ENCODE measurements at regions of chr17 and their contacts with region 1.

Region 1: GRCh38 chr17:48024937-48025906 is 12.4 kb downstream of the COPZ2 start:
- DNase-seq: peak; percentile 98
- ATAC-seq: peak; percentile 91
- H3K4me3 Mint-ChIP-seq: peak overlapping the region; percentile 84
- H3K27ac Mint-ChIP-seq: peak overlapping the region; percentile 78
- H3K4me1 Mint-ChIP-seq: peaks cover 36% of the 10 kb centered on the region
- H3K27me3 Mint-ChIP-seq: peaks cover 16% of the 10 kb centered on the region

Region 2: GRCh38 chr17:48011405-48012150 is 13.6 kb before region 1 on chr17:
- CTCF ChIA-PET with region 1: interaction called, 21 read pairs
- DNase-seq: peak; percentile 83
- ATAC-seq: peak; percentile 85
- H3K4me3 Mint-ChIP-seq: peak overlapping the region; percentile 76
- H3K27ac Mint-ChIP-seq: peak overlapping the region; percentile 72
- H3K4me1 Mint-ChIP-seq: peaks cover 19% of the 10 kb centered on the region
- H3K27me3 Mint-ChIP-seq: peaks cover 36% of the 10 kb centered on the region

Region 3: DNA sequence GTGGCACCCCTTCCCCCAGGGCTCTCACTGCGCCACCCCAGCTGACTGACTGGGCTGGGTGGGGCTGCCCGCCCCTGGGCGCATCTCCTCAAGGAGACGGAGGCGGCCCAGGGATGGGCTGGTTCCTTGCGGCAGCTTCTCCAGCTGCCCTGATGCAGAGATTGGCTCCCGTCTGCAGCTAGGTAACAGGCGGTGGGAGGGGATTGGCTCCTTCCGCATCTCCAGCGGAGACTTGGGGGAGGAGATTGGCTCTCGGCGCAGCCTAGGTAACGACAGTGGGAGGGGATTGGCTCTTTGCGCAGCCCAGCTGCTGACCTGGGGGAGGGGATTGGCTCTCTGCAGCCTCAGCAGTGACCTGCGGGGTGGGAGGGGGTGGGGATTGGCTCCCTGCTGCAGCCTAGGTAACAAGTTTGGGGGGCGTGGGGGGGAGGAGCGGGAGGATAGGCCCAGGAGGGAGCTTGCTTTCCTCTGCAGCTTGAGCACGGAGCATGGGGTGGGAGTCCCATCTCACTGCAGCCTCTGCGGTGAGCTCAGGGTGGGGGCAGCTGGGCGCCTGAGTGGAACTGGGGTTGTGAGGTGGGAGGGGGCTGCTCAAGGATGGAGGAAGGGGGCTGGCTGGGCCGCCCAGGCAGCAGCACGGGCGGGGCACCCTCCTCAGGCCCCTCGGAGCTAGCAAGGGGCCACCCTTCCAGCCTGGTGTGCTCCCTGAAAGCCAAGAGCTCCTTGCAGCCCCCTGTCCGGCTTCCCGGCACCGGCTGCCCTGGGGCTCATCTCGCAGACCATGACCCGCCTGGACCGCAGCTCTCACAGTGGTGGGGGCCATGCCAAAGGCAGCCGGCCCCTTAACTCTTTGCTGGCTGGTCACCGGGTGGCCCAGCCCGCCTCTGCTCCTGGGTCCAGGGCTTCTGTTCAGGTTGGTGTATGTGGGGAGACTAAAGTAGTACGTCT is 29.3 kb after region 1 on chr17:
- CTCF ChIA-PET with region 1: interaction called, 99 read pairs
- DNase-seq: no peak
- ATAC-seq: no peak
- H3K4me3 Mint-ChIP-seq: no peak overlapping the region
- H3K27ac Mint-ChIP-seq: peak overlapping the region; percentile 77
- H3K4me1 Mint-ChIP-seq: peaks cover 62% of the 10 kb centered on the region
- H3K27me3 Mint-ChIP-seq: no peaks in the 10 kb centered on the region

Region 4: GRCh38 chr17:48074315-48075081 is 49.3 kb after region 1 on chr17:
- CTCF ChIA-PET with region 1: interaction called, 191 read pairs
- DNase-seq: peak; percentile 83
- ATAC-seq: peak; percentile 84
- H3K4me3 Mint-ChIP-seq: no peak overlapping the region
- H3K27ac Mint-ChIP-seq: no peak overlapping the region
- H3K4me1 Mint-ChIP-seq: no peaks in the 10 kb centered on the region
- H3K27me3 Mint-ChIP-seq: no peaks in the 10 kb centered on the region

Region 5: DNA sequence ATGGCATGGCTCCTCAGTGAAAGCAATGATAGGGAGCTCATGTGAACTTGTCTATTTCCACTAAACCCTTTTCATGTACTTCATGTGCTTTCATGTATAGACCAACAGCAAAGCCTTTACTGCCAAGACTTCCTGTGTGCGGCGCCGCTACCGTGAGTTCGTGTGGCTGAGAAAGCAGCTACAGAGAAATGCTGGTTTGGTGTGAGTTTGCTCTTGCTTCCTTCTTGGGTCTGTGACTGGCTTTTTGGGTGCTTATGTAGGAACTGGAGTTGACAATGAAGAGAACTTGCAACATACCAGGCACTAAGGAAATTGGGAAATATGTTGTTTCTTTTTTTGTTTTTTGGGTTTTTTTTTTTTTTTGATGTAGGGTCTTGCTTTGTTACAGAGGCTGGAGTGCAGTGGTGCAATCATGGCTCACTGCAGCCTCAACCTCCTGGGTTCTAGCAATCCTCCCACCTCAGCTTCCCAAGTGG is 88.0 kb after region 1 on chr17:
- CTCF ChIA-PET with region 1: interaction called, 29 read pairs
- DNase-seq: peak; percentile 78
- ATAC-seq: peak; percentile 86
- H3K4me3 Mint-ChIP-seq: peak overlapping the region; percentile 49
- H3K27ac Mint-ChIP-seq: peak overlapping the region; percentile 95
- H3K4me1 Mint-ChIP-seq: peaks cover 45% of the 10 kb centered on the region
- H3K27me3 Mint-ChIP-seq: no peaks in the 10 kb centered on the region

Region 6: DNA sequence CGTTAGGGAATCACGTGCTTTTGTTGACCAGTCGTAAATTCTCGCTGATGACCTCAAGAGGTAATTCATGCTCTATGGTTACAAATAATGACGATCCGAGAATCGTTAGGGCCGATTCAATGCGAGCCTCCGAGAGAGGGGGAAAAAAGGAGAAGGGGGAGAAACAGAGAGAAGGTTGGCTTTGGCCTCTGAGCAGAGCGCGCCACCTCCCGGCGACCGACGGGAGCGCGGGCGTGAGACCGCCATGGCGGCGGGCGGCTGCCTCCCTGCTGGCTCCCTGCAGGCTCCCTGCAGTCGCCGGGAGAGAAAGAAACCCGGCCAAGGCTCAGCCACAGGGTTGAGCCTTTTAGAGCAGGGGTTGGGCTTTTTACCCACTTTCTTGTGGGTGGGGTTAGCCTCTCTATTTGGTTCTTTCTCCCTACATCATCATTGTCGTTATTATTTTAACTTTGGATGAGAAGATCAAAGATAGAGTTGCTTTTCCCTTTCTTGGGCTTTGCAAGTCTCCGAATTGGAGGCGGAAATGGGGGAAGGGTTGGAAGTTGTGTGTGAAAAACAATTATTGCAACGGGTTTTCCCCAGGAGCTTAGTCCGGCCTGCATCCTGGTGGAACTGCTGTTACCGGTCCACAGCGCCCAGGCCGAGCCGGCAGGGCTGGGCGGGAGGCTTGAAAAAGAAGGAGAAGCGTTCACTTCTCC is 568.8 kb after region 1 on chr17:
- CTCF ChIA-PET with region 1: interaction called, 11 read pairs
- DNase-seq: peak; percentile 86
- ATAC-seq: peak; percentile 60
- H3K4me3 Mint-ChIP-seq: peak overlapping the region; percentile 73
- H3K27ac Mint-ChIP-seq: no peak overlapping the region
- H3K4me1 Mint-ChIP-seq: peaks cover 38% of the 10 kb centered on the region
- H3K27me3 Mint-ChIP-seq: peaks cover 85% of the 10 kb centered on the region